ENCODE measurements at regions of chr2 and their contacts with region 1.

Region 1: DNA sequence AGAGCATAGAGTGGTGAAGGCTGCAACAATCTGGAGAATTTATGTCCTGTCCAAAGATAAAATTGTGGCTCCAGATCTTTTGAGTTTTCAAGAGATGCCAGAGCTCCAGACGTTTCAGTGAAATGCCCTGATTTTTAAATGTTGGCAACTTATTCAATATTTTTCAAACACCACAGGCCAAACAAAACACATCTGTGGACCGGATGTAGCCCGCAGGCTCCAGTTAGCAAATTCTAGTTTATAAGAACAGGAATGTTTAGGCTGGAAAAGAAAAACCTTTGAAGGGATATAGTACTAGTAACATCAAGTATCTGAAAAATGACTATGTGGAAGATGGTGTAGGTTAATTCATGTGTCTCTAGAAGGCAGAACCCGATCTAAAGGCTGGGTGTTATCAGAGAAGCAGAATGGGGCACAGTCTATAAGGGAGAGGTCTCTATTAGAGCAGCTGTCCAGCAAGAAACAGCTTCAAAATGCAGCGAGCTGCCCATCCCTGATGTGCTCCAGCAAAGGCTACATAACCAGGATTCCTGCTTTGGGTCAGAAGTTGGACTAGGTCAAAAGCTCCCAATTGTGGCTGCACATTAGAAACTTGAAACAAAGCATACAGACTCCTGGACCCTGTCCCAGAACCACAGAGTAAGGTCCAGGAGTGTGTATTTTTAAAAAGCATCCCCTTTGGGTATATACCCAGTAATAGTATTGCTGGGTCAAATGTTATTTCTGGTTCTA is 105.9 kb downstream of the ANKRD44 start:
- DNase-seq: no peak
- ATAC-seq: no peak
- H3K4me3 ChIP-seq: no peak overlapping the region
- H3K27ac ChIP-seq: no peak overlapping the region
- H3K4me1 ChIP-seq: no peaks in the 10 kb centered on the region
- H3K27me3 ChIP-seq: no peaks in the 10 kb centered on the region
- CTCF ChIP-seq: no peak
- EP300 ChIP-seq: no peak
- POLR2A ChIP-seq: no peak
- RAD21 ChIP-seq: no peak

Region 2: GRCh38 chr2:197327472-197328098 is 122.9 kb after region 1 on chr2:
- CTCF ChIA-PET with region 1: no interaction called
- POLR2A ChIA-PET with region 1: no interaction called
- in situ Hi-C with region 1: no loop called
- intact Hi-C with region 1: no loop called
- DNase-seq: no peak
- ATAC-seq: no peak
- H3K4me3 ChIP-seq: no peak overlapping the region
- H3K27ac ChIP-seq: no peak overlapping the region
- H3K4me1 ChIP-seq: peaks cover 18% of the 10 kb centered on the region
- H3K27me3 ChIP-seq: 0 out of 5 replicates have a peak, but pooled peaks cover 0 to 2% of the 10 kb centered on the region in 2 experiments
- CTCF ChIP-seq: no peak
- EP300 ChIP-seq: no peak
- POLR2A ChIP-seq: no peak
- RAD21 ChIP-seq: no peak

Region 3: DNA sequence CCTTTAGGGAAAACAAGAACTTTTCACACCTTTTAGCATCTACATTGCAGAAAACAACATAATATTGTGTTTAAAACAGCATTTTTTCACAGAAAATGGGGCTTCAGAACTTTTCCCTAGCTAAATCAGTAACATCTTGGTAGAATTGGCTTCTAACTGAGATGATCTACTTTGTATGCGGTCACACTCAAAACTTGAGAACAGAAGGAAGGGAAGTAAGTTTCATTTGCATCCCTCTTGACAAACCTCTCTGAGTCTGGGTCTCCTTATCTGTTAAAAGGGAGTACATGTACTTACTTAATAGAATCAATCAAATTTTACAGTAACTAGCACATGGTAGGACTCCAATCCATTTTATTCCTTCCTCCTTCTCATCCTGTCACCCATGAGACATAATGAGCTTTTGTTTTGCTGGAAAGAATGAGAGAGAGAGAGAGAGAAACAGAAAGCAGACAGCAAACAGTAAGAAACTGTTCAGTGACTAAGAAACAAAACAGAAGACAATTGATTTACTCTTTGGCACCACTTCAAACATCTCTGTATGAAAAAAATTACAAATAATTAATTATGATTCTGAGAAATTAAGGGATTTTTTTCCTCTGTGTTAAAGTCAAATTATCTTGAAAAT is 1865.8 kb after region 1 on chr2:
- CTCF ChIA-PET with region 1: no interaction called
- POLR2A ChIA-PET with region 1: no interaction called
- in situ Hi-C with region 1: no loop called
- intact Hi-C with region 1: loop called (anchors 5 kb)
- DNase-seq: no peak
- ATAC-seq: no peak
- H3K4me3 ChIP-seq: no peak overlapping the region
- H3K27ac ChIP-seq: no peak overlapping the region
- H3K4me1 ChIP-seq: no peaks in the 10 kb centered on the region
- H3K27me3 ChIP-seq: no peaks in the 10 kb centered on the region
- CTCF ChIP-seq: no peak
- EP300 ChIP-seq: no peak
- POLR2A ChIP-seq: no peak
- RAD21 ChIP-seq: no peak

Measured in HepG2 (cell line).